BJ (cell line): ENCODE measurements at regions of chr20 and their contacts with region 1.

Region 1: DNA sequence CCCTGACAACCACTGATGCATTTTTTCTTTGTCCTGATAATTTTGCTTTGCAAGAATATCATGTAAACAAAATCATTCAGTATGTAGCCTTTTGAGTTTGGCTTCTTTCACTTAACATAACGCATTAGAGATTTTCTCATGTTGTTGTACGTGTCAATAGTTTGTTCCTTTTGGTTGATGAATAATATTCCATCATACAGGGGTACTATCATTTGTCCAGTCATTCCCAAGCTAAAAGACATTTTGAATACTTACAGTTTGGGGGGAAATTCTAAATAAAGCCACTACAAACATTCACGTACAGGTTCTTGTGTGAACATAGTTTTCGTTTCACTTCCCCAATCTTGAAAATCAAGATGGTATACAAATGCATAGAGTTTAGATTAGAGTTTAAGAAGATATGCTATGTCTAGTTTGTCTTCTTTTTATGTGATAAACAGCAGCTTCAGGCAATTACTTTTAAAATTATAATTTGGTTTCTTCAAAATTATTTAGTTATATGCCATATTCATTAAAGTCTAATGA is 5.2 kb downstream of the HAO1 start:
- DNase-seq: no peak
- H3K4me3 ChIP-seq: no peak overlapping the region
- H3K27me3 ChIP-seq: no peaks in the 10 kb centered on the region; the same call in none of the 2 replicates
- CTCF ChIP-seq: no peak

Region 2: DNA sequence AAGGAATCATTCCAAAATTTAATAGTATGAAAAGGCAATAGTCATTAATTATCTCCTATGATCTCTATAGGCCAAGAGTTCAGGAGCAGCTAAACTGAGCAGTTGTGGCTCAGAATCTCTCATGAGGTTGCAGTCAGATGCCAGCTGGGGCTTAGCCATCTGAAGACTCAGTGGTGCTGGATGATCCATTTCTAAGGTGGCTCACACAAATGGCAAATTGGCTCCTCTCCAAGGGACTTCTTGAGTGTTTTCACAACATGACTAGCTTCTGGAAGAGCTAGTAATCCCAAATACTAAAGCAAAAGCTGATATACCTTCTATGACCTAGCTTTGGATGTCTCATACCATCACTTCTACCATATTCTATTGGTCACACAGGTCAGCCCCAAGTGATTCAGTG is 99.0 kb before region 1 on chr20:
- CTCF ChIA-PET with region 1: no interaction called
- POLR2A ChIA-PET with region 1: no interaction called
- DNase-seq: no peak
- H3K4me3 ChIP-seq: no peak overlapping the region
- H3K27me3 ChIP-seq: no peaks in the 10 kb centered on the region
- CTCF ChIP-seq: no peak

Region 3: GRCh38 chr20:7916648-7917047 is 18.4 kb before region 1 on chr20:
- CTCF ChIA-PET with region 1: no interaction called
- POLR2A ChIA-PET with region 1: no interaction called
- DNase-seq: no peak
- H3K4me3 ChIP-seq: no peak overlapping the region
- H3K27me3 ChIP-seq: no peaks in the 10 kb centered on the region
- CTCF ChIP-seq: no peak

Region 4: GRCh38 chr20:7989379-7989778 is 54.3 kb after region 1 on chr20:
- CTCF ChIA-PET with region 1: interaction called, 19 read pairs
- POLR2A ChIA-PET with region 1: no interaction called
- DNase-seq: no peak
- H3K4me3 ChIP-seq: no peak overlapping the region
- H3K27me3 ChIP-seq: no peaks in the 10 kb centered on the region
- CTCF ChIP-seq: no peak